ENCODE measurements at regions of chr4 and their contacts with region 1.

Region 1: DNA sequence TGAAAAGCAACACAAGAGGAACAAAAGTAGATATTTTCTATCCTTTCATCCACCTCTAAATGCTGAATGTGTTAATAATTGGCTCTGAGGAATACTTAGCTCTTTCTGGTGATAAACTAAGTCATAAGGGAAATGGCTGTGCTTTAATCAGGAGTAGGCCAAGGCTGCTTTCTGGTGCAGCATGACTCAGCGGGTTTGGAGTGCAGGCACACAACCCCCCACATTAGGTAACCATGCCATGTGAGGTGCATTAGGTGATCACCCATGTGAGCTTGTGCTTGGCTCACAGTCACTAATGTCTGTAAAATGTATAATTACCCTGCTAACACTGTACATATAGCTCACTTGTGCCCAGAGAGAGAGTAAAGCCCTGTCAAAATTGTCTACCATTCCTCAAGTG is 57.2 kb downstream of the USP38 start:
- DNase-seq: no peak
- H3K4me3 ChIP-seq: no peak overlapping the region
- H3K27ac ChIP-seq: no peak overlapping the region
- H3K4me1 ChIP-seq: no peaks in the 10 kb centered on the region
- H3K27me3 ChIP-seq: no peaks in the 10 kb centered on the region
- CTCF ChIP-seq: no peak

Region 2: DNA sequence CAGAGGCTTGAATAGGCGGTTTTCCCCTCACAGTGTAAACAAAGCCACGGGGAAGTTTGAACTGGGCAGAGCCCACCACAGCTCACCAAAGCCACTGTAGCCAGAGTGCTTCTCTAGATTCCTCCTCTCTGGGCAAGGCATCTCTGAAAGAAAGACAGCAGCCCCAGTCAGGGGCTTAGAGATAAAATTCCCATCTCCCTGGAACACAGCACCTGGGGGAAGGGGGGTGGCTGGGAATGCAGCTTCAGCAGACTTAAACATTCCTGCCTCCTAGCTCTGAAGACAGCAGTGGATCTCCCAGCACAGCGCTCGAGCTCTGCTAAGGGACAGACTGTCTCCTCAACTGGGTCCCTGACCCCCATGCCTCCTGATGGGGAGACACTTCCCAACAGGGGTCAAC is 101.2 kb before region 1 on chr4:
- CTCF ChIA-PET with region 1: no interaction called
- POLR2A ChIA-PET with region 1: no interaction called
- intact Hi-C with region 1: no loop called
- DNase-seq: no peak
- H3K4me3 ChIP-seq: no peak overlapping the region
- H3K27ac ChIP-seq: no peak overlapping the region
- H3K4me1 ChIP-seq: no peaks in the 10 kb centered on the region
- H3K27me3 ChIP-seq: peaks cover 11% of the 10 kb centered on the region
- CTCF ChIP-seq: no peak

Region 3: GRCh38 chr4:143320113-143320512 is 78.2 kb after region 1 on chr4:
- CTCF ChIA-PET with region 1: no interaction called
- POLR2A ChIA-PET with region 1: interaction called, 21 read pairs
- intact Hi-C with region 1: no loop called
- DNase-seq: no peak
- H3K4me3 ChIP-seq: no peak overlapping the region
- H3K27ac ChIP-seq: no peak overlapping the region
- H3K4me1 ChIP-seq: no peaks in the 10 kb centered on the region
- H3K27me3 ChIP-seq: no peaks in the 10 kb centered on the region
- CTCF ChIP-seq: no peak

Measured in A673 (cell line).